Panc1 (cell line): ENCODE measurements at regions of chr4 and their contacts with region 1.

Region 1: GRCh38 chr4:83297548-83298260 is 13.1 kb upstream of the COQ2 start:
- DNase-seq: no peak
- ATAC-seq: no peak
- H3K4me3 ChIP-seq: no peak overlapping the region
- H3K27ac ChIP-seq: no peak overlapping the region
- H3K4me1 ChIP-seq: no peaks in the 10 kb centered on the region
- H3K27me3 ChIP-seq: no peaks in the 10 kb centered on the region
- CTCF ChIP-seq: no peak

Region 2: GRCh38 chr4:83267121-83267829 is 30.4 kb before region 1 on chr4:
- CTCF ChIA-PET with region 1: no interaction called
- POLR2A ChIA-PET with region 1: interaction called, 19 read pairs
- in situ Hi-C with region 1: no loop called
- intact Hi-C with region 1: no loop called
- DNase-seq: no peak
- ATAC-seq: peak; percentile 75; the same call in 1 of the 2 replicates
- H3K4me3 ChIP-seq: no peak overlapping the region
- H3K27ac ChIP-seq: peak overlapping the region; percentile 73; the same call in 1 of the 2 replicates
- H3K4me1 ChIP-seq: peaks cover 9% of the 10 kb centered on the region; the same call in 1 of the 2 replicates
- H3K27me3 ChIP-seq: no peaks in the 10 kb centered on the region
- CTCF ChIP-seq: no peak